ENCODE measurements at regions of chr13 and their contacts with region 1.

Region 1: GRCh38 chr13:110715395-110716235 is 2.1 kb downstream of the ING1 start:
- DNase-seq: peak; percentile 88 to 95 (median 90)
- ATAC-seq: peak; percentile 81
- H3K4me3 ChIP-seq: peak overlapping the region; percentile 86
- H3K27ac ChIP-seq: peak overlapping the region; percentile 68
- H3K4me1 ChIP-seq: peaks cover 2 to 26% of the 10 kb centered on the region in 2 experiments; a peak in 2 of 5 replicates
- H3K27me3 ChIP-seq: no peaks in the 10 kb centered on the region
- CTCF ChIP-seq: 0 out of 6 replicates have a peak, but pooled peaks of 1 of the 3 experiments have one; percentile 24
- EP300 ChIP-seq: no peak
- POLR2A ChIP-seq: no peak
- RAD21 ChIP-seq: no peak

Region 2: GRCh38 chr13:110593430-110594130 is 122.0 kb before region 1 on chr13:
- CTCF ChIA-PET with region 1: no interaction called
- POLR2A ChIA-PET with region 1: interaction called, 3 read pairs
- in situ Hi-C with region 1: no loop called
- intact Hi-C with region 1: loop called (anchors 2 kb)
- DNase-seq: peak; percentile 32 to 77 (median 52)
- ATAC-seq: peak; percentile 96
- H3K4me3 ChIP-seq: no peak overlapping the region
- H3K27ac ChIP-seq: no peak overlapping the region
- H3K4me1 ChIP-seq: peaks cover 7% of the 10 kb centered on the region in 2 experiments; a peak in 4 of 5 replicates
- H3K27me3 ChIP-seq: no peaks in the 10 kb centered on the region
- CTCF ChIP-seq: peak; percentile 45 to 72 (median 52); a peak in 5 of 6 replicates
- EP300 ChIP-seq: 0 out of 2 replicates have a peak, but pooled peaks have one; percentile 6
- POLR2A ChIP-seq: no peak
- RAD21 ChIP-seq: peak; percentile 79

Region 3: GRCh38 chr13:110615322-110616102 is 100.1 kb before region 1 on chr13 and contains the start of gene NAXD:
- CTCF ChIA-PET with region 1: no interaction called
- POLR2A ChIA-PET with region 1: interaction called, 3 read pairs
- in situ Hi-C with region 1: no loop called
- intact Hi-C with region 1: loop called (anchors 2 kb)
- DNase-seq: peak; percentile 87 to 97 (median 92)
- ATAC-seq: peak; percentile 94
- H3K4me3 ChIP-seq: peak within 1 kb of the TSS; percentile 77
- H3K27ac ChIP-seq: peak within 1 kb of the TSS; percentile 80
- H3K4me1 ChIP-seq: peaks cover 20% of the 10 kb centered on the region in 2 experiments
- H3K27me3 ChIP-seq: no peaks in the 10 kb centered on the region
- CTCF ChIP-seq: no peak
- EP300 ChIP-seq: no peak
- POLR2A ChIP-seq: peak; percentile 79
- RAD21 ChIP-seq: no peak; a peak in 1 of 4 replicates
- polyA plus RNA-seq, gene NAXD: 0.59 to 1.7 TPM

Region 4: GRCh38 chr13:110915057-110915873 is 199.7 kb after region 1 on chr13 and contains the start of gene ANKRD10:
- CTCF ChIA-PET with region 1: no interaction called
- POLR2A ChIA-PET with region 1: no interaction called
- in situ Hi-C with region 1: no loop called
- intact Hi-C with region 1: loop called (anchors 2 kb)
- DNase-seq: peak; percentile 86 to 96 (median 92)
- ATAC-seq: peak; percentile 87
- H3K4me3 ChIP-seq: peak within 1 kb of the TSS; percentile 92
- H3K27ac ChIP-seq: peak within 1 kb of the TSS; percentile 94
- H3K4me1 ChIP-seq: peaks cover 4 to 18% of the 10 kb centered on the region in 2 experiments; a peak in 4 of 5 replicates
- H3K27me3 ChIP-seq: no peaks in the 10 kb centered on the region
- CTCF ChIP-seq: peak; percentile 61 to 80 (median 71)
- EP300 ChIP-seq: 0 out of 2 replicates have a peak, but pooled peaks have one; percentile 8
- POLR2A ChIP-seq: peak; percentile 58
- RAD21 ChIP-seq: peak; percentile 44 to 51
- polyA plus RNA-seq, gene ANKRD10: 22.1 to 31.0 TPM

Measured in K562 (cell line).